ENCODE measurements at regions of chr14 and their contacts with region 1.

Region 1: DNA sequence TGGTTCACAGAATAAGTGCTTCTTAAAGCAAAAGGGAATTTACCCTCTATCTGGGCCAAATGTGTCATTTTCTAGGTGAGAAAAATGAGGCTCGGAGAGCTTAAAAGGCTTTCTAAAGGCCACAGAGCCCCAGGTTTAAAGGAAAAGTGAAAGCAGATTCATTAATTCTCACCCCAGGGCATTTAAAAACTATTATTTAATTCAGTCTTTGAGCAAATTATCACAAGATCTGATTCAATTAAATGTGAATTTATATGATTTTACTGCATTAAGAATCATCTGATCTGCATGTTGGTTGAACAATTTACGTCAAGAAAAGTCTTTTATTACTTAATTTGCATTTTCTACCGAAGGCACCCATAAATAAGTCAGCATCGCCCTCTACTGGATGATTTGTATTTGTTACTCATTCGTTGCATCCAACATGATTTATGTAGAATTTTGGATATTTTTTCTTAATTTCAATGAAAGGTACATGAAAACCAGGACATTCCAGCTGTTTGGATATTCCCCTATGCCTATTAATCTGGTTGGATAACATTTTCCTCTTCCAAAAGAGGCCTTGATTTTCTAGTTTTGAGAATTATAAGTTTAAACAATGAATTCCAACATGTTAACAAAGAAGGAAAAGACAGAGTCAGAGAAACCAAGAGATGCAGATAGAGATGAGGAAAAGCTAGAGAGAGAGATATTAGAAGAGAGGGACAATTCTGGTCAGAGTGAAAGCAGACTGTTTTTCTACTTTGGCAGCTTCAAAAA is 19.1 kb upstream of the DHRS7 start:
- DNase-seq: no peak
- ATAC-seq: peak; percentile 33 to 40
- H3K4me3 ChIP-seq: peak overlapping the region; percentile 73
- H3K27ac ChIP-seq: no peak overlapping the region
- H3K4me1 ChIP-seq: no peaks in the 10 kb centered on the region
- H3K27me3 ChIP-seq: no peaks in the 10 kb centered on the region

Region 2: DNA sequence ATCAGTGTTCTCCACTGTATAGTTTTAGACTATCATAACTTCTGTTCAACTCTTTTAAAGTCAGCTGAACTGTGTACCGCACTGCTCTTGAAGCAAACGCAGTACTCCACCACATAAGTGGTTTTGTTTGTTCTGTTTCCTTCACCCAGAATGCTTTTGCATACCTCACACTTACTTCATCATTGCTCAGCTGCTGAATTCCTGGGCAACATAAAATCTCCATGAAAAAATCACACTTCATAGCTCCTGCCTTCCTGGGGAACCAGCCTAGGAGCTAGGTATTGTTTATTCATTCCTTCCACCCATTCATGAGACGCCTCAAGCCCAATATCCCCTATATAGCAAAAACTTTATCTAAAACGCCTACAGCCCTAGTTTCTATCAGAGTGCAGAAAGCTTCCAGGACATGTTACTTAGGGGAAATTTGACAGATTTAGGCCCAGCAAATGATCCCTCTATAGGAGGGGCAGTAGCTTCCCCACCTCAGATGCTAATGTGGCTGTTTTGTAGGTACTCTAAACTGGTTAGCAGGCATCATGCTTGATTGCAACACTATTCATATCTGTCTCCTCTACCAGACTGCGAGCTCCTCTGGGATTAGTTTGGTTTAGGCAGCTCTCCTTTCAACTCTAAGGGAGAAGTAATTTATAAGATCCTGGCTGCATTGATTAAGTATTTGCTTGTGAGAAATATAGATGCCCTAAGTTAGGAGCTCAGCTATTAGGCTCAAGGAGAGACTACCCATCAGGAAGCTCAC is 219.9 kb before region 1 on chr14:
- intact Hi-C with region 1: loop called (anchors 5 to 10 kb)
- DNase-seq: no peak
- ATAC-seq: peak; percentile 25 to 37
- H3K4me3 ChIP-seq: no peak overlapping the region
- H3K27ac ChIP-seq: no peak overlapping the region
- H3K4me1 ChIP-seq: no peaks in the 10 kb centered on the region
- H3K27me3 ChIP-seq: no peaks in the 10 kb centered on the region

Region 3: DNA sequence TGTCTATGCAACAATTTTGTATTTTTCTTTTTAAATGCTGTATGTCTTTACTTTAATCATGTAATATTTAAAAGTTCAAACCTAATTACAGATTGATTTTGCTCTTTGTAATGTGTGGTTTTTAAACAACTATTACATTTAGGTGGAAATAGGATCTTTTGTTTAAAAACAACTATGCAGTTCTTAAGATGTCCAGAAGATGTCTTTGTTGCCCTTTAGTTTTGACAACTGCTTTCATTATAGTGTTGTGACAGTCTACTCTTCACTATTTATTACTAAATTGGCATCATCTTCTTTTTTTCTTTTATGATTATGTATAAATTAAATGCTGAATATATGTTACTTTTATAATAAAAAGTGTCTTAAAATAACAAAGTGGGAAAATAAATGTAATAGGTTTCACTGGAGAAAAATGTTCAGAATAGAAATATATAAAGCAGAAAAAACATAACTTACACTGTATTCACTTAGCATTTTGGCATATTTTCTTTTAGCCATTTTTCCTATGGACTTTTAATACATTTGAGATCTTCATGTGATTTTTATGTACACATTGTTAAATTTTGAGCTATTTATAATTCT is 119.7 kb before region 1 on chr14:
- intact Hi-C with region 1: loop called (anchors 2 to 10 kb)
- DNase-seq: no peak
- ATAC-seq: no peak
- H3K4me3 ChIP-seq: no peak overlapping the region
- H3K27ac ChIP-seq: no peak overlapping the region
- H3K4me1 ChIP-seq: no peaks in the 10 kb centered on the region
- H3K27me3 ChIP-seq: no peaks in the 10 kb centered on the region

Region 4: DNA sequence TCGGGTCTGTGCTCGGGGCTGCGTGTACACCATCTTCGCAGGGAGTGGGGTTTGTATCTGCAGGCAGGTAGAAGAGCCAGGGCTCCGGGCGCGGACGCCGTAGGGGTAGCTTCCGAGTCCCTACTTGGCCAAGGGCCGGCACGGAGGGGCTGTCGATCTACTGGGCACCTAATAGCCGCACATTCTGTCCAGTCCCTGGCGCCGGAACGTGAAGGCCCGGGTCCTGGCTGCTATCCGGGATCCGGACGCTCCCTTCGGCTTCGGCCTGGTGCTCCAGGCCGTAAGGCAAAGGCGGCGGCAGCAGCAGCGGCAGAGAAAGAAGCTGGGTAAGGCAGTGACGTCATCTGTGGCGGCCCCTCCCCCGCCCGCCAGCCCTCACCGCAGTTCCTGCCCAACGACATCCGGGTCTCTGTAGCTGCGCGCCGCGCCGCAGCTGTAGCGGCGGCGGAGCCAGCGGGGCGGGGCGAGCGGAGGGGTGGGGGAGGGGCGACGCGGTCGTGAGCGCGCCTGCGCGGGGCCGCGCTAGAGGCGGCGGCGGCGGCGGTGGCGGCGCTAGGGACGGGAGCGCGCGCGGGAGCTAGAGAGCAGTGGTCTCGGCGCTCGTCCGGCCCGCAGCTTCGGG is 64.5 kb after region 1 on chr14 and contains the start of gene PPM1A:
- intact Hi-C with region 1: no loop called
- DNase-seq: peak; percentile 97 to 99 (median 99)
- ATAC-seq: peak; percentile 96 to 97
- H3K4me3 ChIP-seq: peak within 1 kb of the TSS; percentile 100
- H3K27ac ChIP-seq: peak within 1 kb of the TSS; percentile 100
- H3K4me1 ChIP-seq: no peaks in the 10 kb centered on the region
- H3K27me3 ChIP-seq: no peaks in the 10 kb centered on the region
- total RNA-seq, gene PPM1A: 73.0 to 88.2 (median 80.8) TPM

Measured in right cardiac atrium (tissue), 5 donors.